Activated B cell treated with CpG ODN at 0.5 μM for 24 hours (primary cell): ENCODE measurements at regions of chr1 and their contacts with region 1.

Region 1: GRCh38 chr1:23800400-23801337 is at the start of gene GALE:
- DNase-seq: peak; percentile 94
- ATAC-seq: peak; percentile 95
- H3K4me3 Mint-ChIP-seq: peak within 1 kb of the TSS; percentile 91
- H3K27ac Mint-ChIP-seq: peak within 1 kb of the TSS; percentile 76
- H3K4me1 Mint-ChIP-seq: peaks cover 21% of the 10 kb centered on the region
- H3K27me3 Mint-ChIP-seq: no peaks in the 10 kb centered on the region
- CTCF ChIP-seq: no peak
- total RNA-seq, gene GALE: 15.9 and 16.4 TPM in 2 replicates

Region 2: GRCh38 chr1:23777979-23778814 is 22.5 kb before region 1 on chr1 and contains the start of gene PITHD1:
- CTCF ChIA-PET with region 1: no interaction called
- POLR2A ChIA-PET with region 1: interaction called, 25 read pairs
- intact Hi-C with region 1: loop called (anchors 1 kb)
- DNase-seq: peak; percentile 83
- ATAC-seq: peak; percentile 86
- H3K4me3 Mint-ChIP-seq: peak within 1 kb of the TSS; percentile 91
- H3K27ac Mint-ChIP-seq: peak within 1 kb of the TSS; percentile 90
- H3K4me1 Mint-ChIP-seq: peaks cover 30% of the 10 kb centered on the region
- H3K27me3 Mint-ChIP-seq: no peaks in the 10 kb centered on the region
- CTCF ChIP-seq: no peak
- total RNA-seq, gene PITHD1: 58.7 and 63.3 TPM in 2 replicates